ENCODE measurements at regions of chr17 and their contacts with region 1.

Region 1: GRCh38 chr17:4771519-4772234 is at the start of gene TM4SF5:
- DNase-seq: peak; percentile 50 to 68
- H3K4me3 ChIP-seq: peak within 1 kb of the TSS; percentile 8; the same call in 1 of the 2 replicates
- H3K4me3 Mint-ChIP-seq: peak within 1 kb of the TSS; percentile 52
- H3K27ac Mint-ChIP-seq: peak within 1 kb of the TSS; percentile 77
- H3K4me1 ChIP-seq: peaks cover 11% of the 10 kb centered on the region
- H3K4me1 Mint-ChIP-seq: peaks cover 16% of the 10 kb centered on the region
- H3K27me3 ChIP-seq: no peaks in the 10 kb centered on the region
- H3K27me3 Mint-ChIP-seq: no peaks in the 10 kb centered on the region
- CTCF ChIP-seq: no peak
- total RNA-seq, gene TM4SF5: 9.9 and 12.1 TPM in 2 replicates

Region 2: GRCh38 chr17:4720787-4721186 is 50.9 kb before region 1 on chr17:
- CTCF ChIA-PET with region 1: no interaction called
- POLR2A ChIA-PET with region 1: interaction called, 14 read pairs
- intact Hi-C with region 1: no loop called
- DNase-seq: no peak
- H3K4me3 ChIP-seq: no peak overlapping the region
- H3K4me3 Mint-ChIP-seq: no peak overlapping the region
- H3K27ac Mint-ChIP-seq: peak overlapping the region; percentile 45
- H3K4me1 ChIP-seq: peaks cover 10% of the 10 kb centered on the region; the same call in 1 of the 2 replicates
- H3K4me1 Mint-ChIP-seq: no peaks in the 10 kb centered on the region
- H3K27me3 ChIP-seq: no peaks in the 10 kb centered on the region
- H3K27me3 Mint-ChIP-seq: no peaks in the 10 kb centered on the region
- CTCF ChIP-seq: no peak